ENCODE measurements at regions of chr15 and their contacts with region 1.

Region 1: DNA sequence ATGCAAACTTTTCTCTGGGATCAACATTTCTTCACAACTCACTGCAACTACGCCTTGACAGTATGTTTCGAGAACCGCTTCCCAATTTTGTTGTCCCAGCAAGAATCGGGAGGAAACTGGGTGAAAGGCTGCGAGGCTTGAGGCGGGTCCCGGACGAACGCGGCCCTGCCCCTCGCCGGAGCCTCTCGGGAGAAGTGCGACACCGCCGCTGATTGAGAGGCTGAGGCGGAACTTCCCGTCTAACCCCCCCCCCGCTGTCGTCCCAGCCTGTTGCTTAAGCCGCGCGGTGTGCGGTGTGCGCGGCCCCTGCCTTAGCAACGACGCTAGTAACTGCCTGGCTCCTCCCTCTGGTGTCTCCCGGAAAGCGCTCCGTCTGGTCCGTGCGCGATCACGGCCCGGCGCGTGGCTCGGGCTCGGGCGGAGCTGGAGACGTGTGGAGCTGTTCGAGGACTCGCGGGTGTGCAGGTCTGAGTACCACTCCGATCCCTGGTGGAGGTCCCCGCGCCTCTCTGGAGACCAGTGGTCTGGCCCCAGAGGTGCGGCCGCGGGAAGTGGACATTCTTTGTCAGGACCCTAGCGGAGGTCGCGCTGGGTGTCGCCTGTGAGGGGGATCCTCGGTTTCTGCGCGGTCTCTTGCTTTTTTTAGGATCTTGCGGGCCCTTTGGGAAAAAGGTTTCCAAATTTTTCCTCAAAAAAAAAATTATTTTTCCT is at the starts of genes DTWD1 and FAM227B:
- DNase-seq: peak; percentile 85 to 98 (median 92)
- ATAC-seq: peak; percentile 96
- H3K4me3 ChIP-seq: peak within 1 kb of the TSS; percentile 77
- H3K4me3 Mint-ChIP-seq: peak within 1 kb of the TSS; percentile 99
- H3K27ac ChIP-seq: peak within 1 kb of the TSS; percentile 64 to 75
- H3K27ac Mint-ChIP-seq: peak within 1 kb of the TSS; percentile 97
- H3K4me1 ChIP-seq: peaks cover 9% of the 10 kb centered on the region
- H3K4me1 Mint-ChIP-seq: peaks cover 54% of the 10 kb centered on the region
- H3K27me3 ChIP-seq: no peaks in the 10 kb centered on the region
- H3K27me3 Mint-ChIP-seq: no peaks in the 10 kb centered on the region
- CTCF ChIP-seq: no peak
- total RNA-seq, gene DTWD1: 10.1 to 10.2 TPM
- total RNA-seq, gene FAM227B: 3.0 to 4.4 TPM

Region 2: GRCh38 chr15:48330855-48331795 is 1289.7 kb before region 1 on chr15 and contains the start of gene DUT:
- CTCF ChIA-PET with region 1: no interaction called
- POLR2A ChIA-PET with region 1: no interaction called
- intact Hi-C with region 1: loop called in 1 of 2 experiments (anchors 5 kb)
- DNase-seq: peak; percentile 63 to 91 (median 78)
- ATAC-seq: peak; percentile 80
- H3K4me3 ChIP-seq: peak within 1 kb of the TSS; percentile 81
- H3K4me3 Mint-ChIP-seq: peak within 1 kb of the TSS; percentile 100
- H3K27ac ChIP-seq: peak within 1 kb of the TSS; percentile 88 to 90
- H3K27ac Mint-ChIP-seq: peak within 1 kb of the TSS; percentile 99
- H3K4me1 ChIP-seq: peaks cover 14% of the 10 kb centered on the region
- H3K4me1 Mint-ChIP-seq: peaks cover 28% of the 10 kb centered on the region
- H3K27me3 ChIP-seq: no peaks in the 10 kb centered on the region
- H3K27me3 Mint-ChIP-seq: no peaks in the 10 kb centered on the region
- CTCF ChIP-seq: no peak
- total RNA-seq, gene DUT: 60.7 to 65.3 TPM

Region 3: DNA sequence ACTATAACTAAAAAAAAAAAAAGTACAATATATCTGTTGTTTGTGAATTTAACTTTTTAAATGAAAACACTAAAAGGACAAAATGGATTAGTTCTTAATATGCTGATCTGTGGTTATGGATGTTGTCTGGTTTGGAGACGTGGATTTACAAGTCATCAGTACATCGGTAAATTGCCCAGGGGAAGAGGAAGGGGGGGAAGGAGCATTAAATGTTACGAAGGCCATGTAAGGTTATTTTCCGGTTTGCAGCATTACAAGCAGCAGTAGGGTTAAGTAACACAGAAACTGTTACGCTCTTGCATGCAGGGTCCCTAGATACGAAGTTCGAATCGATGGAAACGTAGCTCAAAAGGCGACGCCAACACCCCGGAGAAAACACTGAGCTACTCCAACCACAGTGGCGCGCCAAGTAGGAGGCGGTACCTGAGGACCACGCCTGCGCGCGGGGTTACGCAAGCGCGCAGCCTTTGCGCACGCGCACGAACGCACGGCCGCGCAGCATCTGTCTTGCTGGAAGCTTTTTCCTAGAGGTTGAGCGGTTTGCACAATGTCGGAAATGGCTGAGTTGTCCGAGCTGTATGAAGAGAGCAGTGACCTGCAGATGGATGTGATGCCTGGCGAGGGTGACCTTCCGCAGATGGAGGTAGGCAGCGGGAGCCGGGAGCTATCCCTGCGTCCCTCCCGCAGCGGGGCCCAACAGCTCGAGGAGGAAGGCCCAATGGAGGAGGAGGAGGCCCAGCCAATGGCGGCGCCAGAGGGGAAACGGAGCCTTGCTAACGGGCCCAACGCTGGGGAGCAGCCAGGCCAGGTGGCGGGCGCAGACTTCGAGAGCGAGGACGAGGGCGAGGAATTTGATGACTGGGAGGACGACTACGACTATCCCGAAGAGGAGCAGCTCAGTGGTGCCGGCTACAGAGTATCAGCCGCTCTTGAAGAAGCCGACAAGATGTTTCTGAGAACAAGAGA is 742.9 kb before region 1 on chr15 and contains the start of gene EID1:
- CTCF ChIA-PET with region 1: no interaction called
- POLR2A ChIA-PET with region 1: interaction called, 11 read pairs
- intact Hi-C with region 1: loop called in 1 of 2 experiments (anchors 5 kb)
- DNase-seq: peak; percentile 84 to 98 (median 90)
- ATAC-seq: peak; percentile 93
- H3K4me3 ChIP-seq: peak within 1 kb of the TSS; percentile 92
- H3K4me3 Mint-ChIP-seq: peak within 1 kb of the TSS; percentile 94
- H3K27ac ChIP-seq: peak within 1 kb of the TSS; percentile 68 to 78
- H3K27ac Mint-ChIP-seq: peak within 1 kb of the TSS; percentile 95
- H3K4me1 ChIP-seq: peaks cover 7% of the 10 kb centered on the region
- H3K4me1 Mint-ChIP-seq: peaks cover 23% of the 10 kb centered on the region
- H3K27me3 ChIP-seq: no peaks in the 10 kb centered on the region
- H3K27me3 Mint-ChIP-seq: peaks cover 25% of the 10 kb centered on the region
- CTCF ChIP-seq: no peak
- total RNA-seq, gene EID1: 41.0 to 45.3 TPM

Region 4: GRCh38 chr15:49169880-49170597 is 450.8 kb before region 1 on chr15 and contains the start of gene GALK2:
- CTCF ChIA-PET with region 1: no interaction called
- POLR2A ChIA-PET with region 1: interaction called, 5 read pairs
- intact Hi-C with region 1: loop called in 1 of 2 experiments (anchors 5 kb)
- DNase-seq: peak; percentile 48 to 94 (median 73)
- ATAC-seq: peak; percentile 98
- H3K4me3 ChIP-seq: peak within 1 kb of the TSS; percentile 76
- H3K4me3 Mint-ChIP-seq: peak within 1 kb of the TSS; percentile 92
- H3K27ac ChIP-seq: peak within 1 kb of the TSS; percentile 77 to 88
- H3K27ac Mint-ChIP-seq: peak within 1 kb of the TSS; percentile 93
- H3K4me1 ChIP-seq: peaks cover 18% of the 10 kb centered on the region
- H3K4me1 Mint-ChIP-seq: peaks cover 52% of the 10 kb centered on the region
- H3K27me3 ChIP-seq: no peaks in the 10 kb centered on the region
- H3K27me3 Mint-ChIP-seq: no peaks in the 10 kb centered on the region
- CTCF ChIP-seq: no peak
- total RNA-seq, gene GALK2: 11.5 to 11.9 TPM

Region 5: DNA sequence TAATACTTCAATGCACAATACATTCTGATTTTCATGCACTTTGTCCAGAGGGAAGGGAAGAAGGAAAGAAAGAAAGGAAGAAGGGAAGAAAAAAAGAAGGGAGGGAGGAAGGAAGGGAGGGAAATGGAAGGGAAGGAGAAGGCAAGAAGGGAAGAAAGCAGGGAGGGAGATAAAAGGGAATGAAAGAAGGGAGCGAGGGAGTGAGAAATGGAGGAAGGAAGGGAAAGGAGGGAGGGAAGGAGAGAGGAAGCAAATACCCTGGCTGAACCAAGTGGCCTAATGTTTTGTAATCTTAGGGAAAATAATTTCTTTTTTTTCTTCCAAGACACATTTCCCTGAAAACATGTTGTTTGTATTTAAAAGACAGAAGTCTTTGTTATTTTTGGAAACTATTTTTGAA is 35.9 kb after region 1 on chr15:
- CTCF ChIA-PET with region 1: no interaction called
- POLR2A ChIA-PET with region 1: no interaction called
- intact Hi-C with region 1: no loop called
- DNase-seq: no peak
- ATAC-seq: no peak
- H3K4me3 ChIP-seq: no peak overlapping the region
- H3K4me3 Mint-ChIP-seq: no peak overlapping the region
- H3K27ac ChIP-seq: no peak overlapping the region
- H3K27ac Mint-ChIP-seq: no peak overlapping the region
- H3K4me1 ChIP-seq: no peaks in the 10 kb centered on the region
- H3K4me1 Mint-ChIP-seq: no peaks in the 10 kb centered on the region
- H3K27me3 ChIP-seq: no peaks in the 10 kb centered on the region
- H3K27me3 Mint-ChIP-seq: peaks cover 22% of the 10 kb centered on the region
- CTCF ChIP-seq: no peak

Region 6: DNA sequence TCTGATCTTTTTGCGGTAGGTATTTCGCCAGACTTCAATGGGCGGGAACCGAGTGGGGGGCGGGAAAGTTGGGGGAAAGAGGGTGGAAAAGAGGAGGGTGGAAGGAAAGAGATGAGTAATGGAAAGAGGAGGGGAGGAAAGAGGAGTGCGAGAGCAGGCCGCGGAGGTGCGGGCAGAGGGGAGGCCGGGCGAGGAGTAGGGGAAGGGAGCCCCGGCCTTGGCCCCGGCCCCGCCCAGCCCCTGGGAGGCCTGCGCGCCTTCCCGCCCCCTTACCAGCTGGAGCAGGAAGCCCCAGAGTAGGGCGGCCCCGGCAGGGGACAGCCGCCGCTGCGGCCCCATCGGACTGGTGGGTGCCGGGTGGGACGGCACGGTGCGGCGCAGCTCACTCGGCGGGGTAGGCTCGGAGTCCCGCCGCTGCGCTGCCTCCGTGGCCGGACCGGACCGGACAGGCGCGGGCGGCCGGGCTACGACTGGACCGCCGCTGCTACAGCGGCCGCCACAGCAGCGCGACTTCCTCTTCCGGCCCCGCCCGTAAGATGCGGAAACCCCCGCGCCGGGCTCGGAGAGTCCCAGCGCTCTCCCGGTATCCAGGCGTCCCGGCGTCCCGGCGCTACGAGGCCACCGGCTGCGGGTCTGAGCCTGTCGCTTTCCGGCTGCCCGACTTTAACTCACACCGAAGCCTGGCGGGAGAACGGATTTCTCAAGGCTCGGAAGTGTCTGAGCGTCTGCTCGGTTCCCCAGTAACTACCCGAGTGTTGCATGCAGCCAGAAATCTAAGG is 1144.6 kb after region 1 on chr15 and contains the start of gene SPPL2A:
- CTCF ChIA-PET with region 1: no interaction called
- POLR2A ChIA-PET with region 1: no interaction called
- intact Hi-C with region 1: loop called in 1 of 2 experiments (anchors 5 kb)
- DNase-seq: peak; percentile 47 to 88 (median 69)
- ATAC-seq: peak; percentile 89
- H3K4me3 ChIP-seq: peak within 1 kb of the TSS; percentile 72
- H3K4me3 Mint-ChIP-seq: peak within 1 kb of the TSS; percentile 94
- H3K27ac ChIP-seq: peak within 1 kb of the TSS; percentile 82 to 88
- H3K27ac Mint-ChIP-seq: peak within 1 kb of the TSS; percentile 84
- H3K4me1 ChIP-seq: peaks cover 25% of the 10 kb centered on the region
- H3K4me1 Mint-ChIP-seq: peaks cover 44% of the 10 kb centered on the region
- H3K27me3 ChIP-seq: no peaks in the 10 kb centered on the region
- H3K27me3 Mint-ChIP-seq: no peaks in the 10 kb centered on the region
- CTCF ChIP-seq: no peak
- total RNA-seq, gene SPPL2A: 26.6 to 30.7 TPM